ENCODE measurements at regions of chr1 and their contacts with region 1.

Region 1: GRCh38 chr1:185488808-185489207 is 171.8 kb upstream of the IVNS1ABP start:
- DNase-seq: no peak

Region 2: GRCh38 chr1:185652348-185652747 is 163.5 kb after region 1 on chr1:
- intact Hi-C with region 1: loop called (anchors 5 kb)
- DNase-seq: no peak